Right ventricle myocardium superior (tissue), 1 donor: ENCODE measurements at regions of chr14 and their contacts with region 1.

Region 1: DNA sequence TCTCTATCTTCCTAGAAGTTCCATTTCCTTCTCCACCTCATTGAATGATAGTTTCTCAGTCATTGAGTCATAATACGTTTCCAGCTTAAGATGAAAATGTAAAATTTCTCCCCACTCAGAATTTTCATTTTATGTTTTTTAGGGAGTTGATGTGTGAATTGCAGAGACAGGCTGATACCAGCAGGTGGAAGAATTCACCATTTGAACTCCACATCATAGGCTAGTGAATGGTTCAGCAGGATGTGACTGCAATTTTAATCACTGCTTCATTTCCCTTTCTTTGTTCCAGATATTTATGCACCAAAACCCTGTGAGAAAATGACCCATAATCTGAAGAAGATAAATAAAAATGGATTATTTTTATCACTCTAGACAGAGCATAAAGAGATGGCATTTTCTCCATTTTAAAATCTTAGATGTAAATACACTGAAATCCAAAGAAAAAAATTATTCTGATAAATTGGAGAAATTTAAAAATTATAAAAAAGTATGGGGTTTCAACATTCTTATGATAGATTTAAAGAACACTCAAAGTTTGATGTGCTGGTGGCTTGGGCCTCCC is 10.6 kb upstream of the PYGL start:
- DNase-seq: no peak
- ATAC-seq: peak; percentile 75

Region 2: GRCh38 chr14:51219473-51220448 is 264.9 kb after region 1 on chr14:
- intact Hi-C with region 1: loop called (anchors 10 kb)
- DNase-seq: no peak
- ATAC-seq: no peak

Region 3: GRCh38 chr14:51342241-51342691 is 387.4 kb after region 1 on chr14:
- intact Hi-C with region 1: no loop called
- DNase-seq: no peak
- ATAC-seq: no peak